IMR-90 (cell line): ENCODE measurements at regions of chrX and their contacts with region 1.

Region 1: DNA sequence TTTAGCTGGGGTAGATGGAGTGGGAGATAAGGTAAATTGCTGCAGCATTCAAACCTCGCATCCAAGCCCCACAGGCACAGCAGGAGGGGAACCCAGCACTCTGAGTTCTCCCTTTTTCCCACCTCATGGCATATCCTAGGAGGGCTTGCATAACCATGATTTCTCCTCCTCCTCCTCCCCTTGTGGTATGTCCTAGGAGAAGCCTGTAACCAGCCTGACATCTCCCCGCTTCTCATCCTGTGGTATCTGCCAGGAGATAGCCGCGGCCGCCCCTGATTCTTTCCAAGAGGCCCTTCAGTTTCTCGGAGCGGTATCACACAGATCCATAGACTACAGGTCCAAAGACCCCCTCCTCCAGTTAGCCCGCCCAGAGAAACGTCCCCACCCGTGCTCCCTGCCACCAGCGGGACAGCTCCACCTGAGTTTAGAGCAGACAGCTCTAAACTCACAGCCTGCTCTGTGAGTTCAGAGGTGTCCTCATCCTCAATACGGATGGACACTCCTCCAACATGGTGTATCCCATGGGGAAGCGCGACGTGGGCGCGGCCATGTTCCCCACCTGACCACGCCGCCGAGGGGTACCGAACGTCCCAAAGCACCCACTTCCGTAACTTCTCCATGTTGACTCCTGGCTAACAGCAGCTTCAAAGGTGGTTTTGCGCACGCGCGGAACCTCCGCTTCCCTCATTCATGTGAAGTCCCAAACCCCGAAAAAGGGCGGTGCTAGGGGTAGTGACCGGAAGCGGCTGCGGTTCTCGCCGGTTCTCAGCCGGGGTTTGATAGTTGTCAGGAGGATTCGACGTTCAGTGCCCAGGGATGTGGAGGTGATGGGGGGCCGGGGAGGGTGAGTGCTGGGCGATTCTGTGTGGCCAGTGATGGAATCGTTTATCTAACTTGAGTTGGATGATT is at the start of gene ZNF81:
- DNase-seq: peak; percentile 96
- ATAC-seq: peak; percentile 97
- H3K4me3 ChIP-seq: peak within 1 kb of the TSS; percentile 65
- H3K27ac ChIP-seq: peak within 1 kb of the TSS; percentile 78
- H3K4me1 ChIP-seq: no peaks in the 10 kb centered on the region
- H3K27me3 ChIP-seq: no peaks in the 10 kb centered on the region
- CTCF ChIP-seq: no peak
- POLR2A ChIP-seq: peak; percentile 73
- RAD21 ChIP-seq: no peak
- total RNA-seq, gene ZNF81: 4.5 and 5.6 TPM in 2 replicates

Region 2: GRCh38 chrX:47658684-47659515 is 177.5 kb before region 1 on chrX and contains the start of gene UXT:
- CTCF ChIA-PET with region 1: no interaction called
- POLR2A ChIA-PET with region 1: no interaction called
- dilution Hi-C with region 1: no loop called
- in situ Hi-C with region 1: no loop called
- intact Hi-C with region 1: loop called (anchors 1 kb)
- DNase-seq: peak; percentile 94
- ATAC-seq: peak; percentile 89
- H3K4me3 ChIP-seq: peak within 1 kb of the TSS; percentile 87
- H3K27ac ChIP-seq: peak within 1 kb of the TSS; percentile 99
- H3K4me1 ChIP-seq: peaks cover 4% of the 10 kb centered on the region; the same call in 1 of the 2 replicates
- H3K27me3 ChIP-seq: no peaks in the 10 kb centered on the region
- CTCF ChIP-seq: no peak
- POLR2A ChIP-seq: peak; percentile 86; the same call in 1 of the 2 replicates
- RAD21 ChIP-seq: no peak
- total RNA-seq, gene UXT: 128 and 164 TPM in 2 replicates

Region 3: DNA sequence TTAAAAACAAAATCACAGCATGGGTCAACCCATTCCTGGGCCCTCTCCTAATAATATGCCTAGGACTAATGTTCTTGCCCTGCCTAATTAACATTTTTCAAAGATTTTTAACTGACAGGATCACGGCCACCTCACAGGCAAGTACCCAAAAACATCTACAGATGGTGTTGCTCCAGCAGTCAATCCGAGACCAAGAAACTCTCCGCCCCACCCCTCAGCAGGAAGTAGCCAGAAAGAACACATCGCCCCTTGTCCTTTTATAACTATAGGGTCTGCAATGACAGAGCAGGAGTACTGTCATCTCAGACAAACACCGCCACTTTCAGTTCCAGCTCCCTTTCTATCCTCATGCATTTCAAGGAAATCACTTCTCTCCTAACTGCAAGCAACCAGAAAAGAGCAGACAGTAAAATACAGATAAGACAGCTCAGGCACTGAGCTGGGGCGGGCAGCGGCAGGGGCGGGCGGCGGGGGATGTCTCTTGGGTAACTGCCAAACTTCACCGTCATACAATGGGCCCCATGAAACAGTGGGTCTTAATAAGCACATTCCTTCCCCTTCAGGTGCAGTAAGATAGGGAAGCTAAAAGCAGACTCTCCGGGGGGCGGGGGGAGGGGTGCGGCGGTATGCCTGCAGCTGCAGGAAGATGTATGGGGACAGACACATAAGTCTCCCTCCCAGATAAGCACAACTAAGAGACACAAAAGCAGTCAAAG is 100.0 kb after region 1 on chrX:
- CTCF ChIA-PET with region 1: no interaction called
- POLR2A ChIA-PET with region 1: no interaction called
- dilution Hi-C with region 1: no loop called
- in situ Hi-C with region 1: no loop called
- intact Hi-C with region 1: no loop called
- DNase-seq: no peak
- ATAC-seq: no peak
- H3K4me3 ChIP-seq: no peak overlapping the region
- H3K27ac ChIP-seq: no peak overlapping the region
- H3K4me1 ChIP-seq: no peaks in the 10 kb centered on the region
- H3K27me3 ChIP-seq: no peaks in the 10 kb centered on the region
- CTCF ChIP-seq: no peak
- POLR2A ChIP-seq: no peak
- RAD21 ChIP-seq: no peak

Region 4: GRCh38 chrX:48493890-48494364 is 657.5 kb after region 1 on chrX:
- CTCF ChIA-PET with region 1: no interaction called
- POLR2A ChIA-PET with region 1: no interaction called
- dilution Hi-C with region 1: no loop called
- in situ Hi-C with region 1: no loop called
- intact Hi-C with region 1: loop called (anchors 5 kb)
- DNase-seq: peak; percentile 38
- ATAC-seq: peak; percentile 55
- H3K4me3 ChIP-seq: no peak overlapping the region
- H3K27ac ChIP-seq: no peak overlapping the region
- H3K4me1 ChIP-seq: peaks cover 6% of the 10 kb centered on the region
- H3K27me3 ChIP-seq: no peaks in the 10 kb centered on the region
- CTCF ChIP-seq: peak; percentile 52
- POLR2A ChIP-seq: no peak
- RAD21 ChIP-seq: peak; percentile 59